PC-9 (cell line): ENCODE measurements at regions of chr6 and their contacts with region 1.

Region 1: DNA sequence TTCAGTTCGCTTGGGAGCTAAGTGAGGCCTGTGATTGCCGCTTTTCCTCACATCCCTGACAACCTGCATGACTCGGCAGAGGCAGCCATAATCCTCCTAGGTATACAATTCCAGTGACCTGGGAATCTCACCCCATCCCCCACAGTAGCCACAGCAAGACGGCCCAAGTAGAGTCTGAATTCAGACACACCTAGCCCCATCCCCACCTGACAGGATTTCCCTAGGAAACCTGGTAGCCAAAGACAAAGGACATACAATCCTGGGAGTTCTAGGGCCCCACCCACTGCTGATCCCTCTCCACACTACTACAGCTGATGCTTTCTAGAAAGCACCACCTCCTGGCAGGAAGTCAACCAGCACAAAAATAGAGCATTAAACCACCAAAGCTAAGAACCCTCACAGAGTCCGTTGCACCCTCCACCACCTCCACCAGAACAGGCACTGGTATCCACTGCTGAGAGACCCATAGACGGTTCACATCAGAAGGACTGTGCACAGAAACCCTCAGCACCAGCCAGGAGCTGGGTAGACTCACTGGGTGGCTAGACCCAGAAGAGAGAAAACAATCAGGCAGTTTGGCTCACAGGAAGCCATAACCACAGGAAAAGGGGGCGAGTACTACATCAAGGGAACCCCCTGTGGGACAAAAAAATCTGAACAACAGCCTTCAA is 17.9 kb upstream of the RUNX2 start:
- DNase-seq: no peak
- H3K4me3 ChIP-seq: no peak overlapping the region
- H3K27ac ChIP-seq: no peak overlapping the region
- H3K4me1 ChIP-seq: no peaks in the 10 kb centered on the region
- H3K27me3 ChIP-seq: no peaks in the 10 kb centered on the region
- CTCF ChIP-seq: no peak

Region 2: DNA sequence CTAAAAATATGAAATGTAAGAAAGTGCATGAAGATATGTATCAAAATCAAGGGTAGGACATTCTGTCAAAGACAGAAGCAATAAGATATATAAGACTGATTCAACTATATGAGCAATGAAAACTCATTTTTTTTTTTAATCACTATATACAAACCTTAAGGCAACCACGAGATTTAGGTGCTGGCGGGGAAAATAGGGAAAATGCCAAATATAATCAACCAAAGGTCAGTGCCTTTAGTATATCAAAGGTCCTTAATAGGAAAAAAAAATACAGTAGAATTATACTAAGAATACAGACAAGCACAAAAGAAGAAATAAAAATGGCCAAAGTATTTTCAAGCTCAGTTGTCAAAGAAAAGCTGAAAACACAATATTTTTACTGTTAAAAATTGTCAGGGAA is 43.4 kb after region 1 on chr6:
- CTCF ChIA-PET with region 1: no interaction called
- POLR2A ChIA-PET with region 1: interaction called, 15 read pairs
- intact Hi-C with region 1: no loop called
- DNase-seq: no peak
- H3K4me3 ChIP-seq: no peak overlapping the region
- H3K27ac ChIP-seq: no peak overlapping the region
- H3K4me1 ChIP-seq: no peaks in the 10 kb centered on the region
- H3K27me3 ChIP-seq: no peaks in the 10 kb centered on the region
- CTCF ChIP-seq: no peak

Region 3: GRCh38 chr6:45377554-45378333 is 67.5 kb after region 1 on chr6 and contains the start of gene SUPT3H:
- CTCF ChIA-PET with region 1: no interaction called
- POLR2A ChIA-PET with region 1: no interaction called
- intact Hi-C with region 1: no loop called
- DNase-seq: peak; percentile 76 to 89
- H3K4me3 ChIP-seq: peak within 1 kb of the TSS; percentile 93
- H3K27ac ChIP-seq: peak within 1 kb of the TSS; percentile 94
- H3K4me1 ChIP-seq: peaks cover 8% of the 10 kb centered on the region
- H3K27me3 ChIP-seq: no peaks in the 10 kb centered on the region
- CTCF ChIP-seq: no peak
- total RNA-seq, gene SUPT3H: 9.0 and 9.2 TPM in 2 replicates

Region 4: GRCh38 chr6:45880159-45880558 is 569.9 kb after region 1 on chr6:
- CTCF ChIA-PET with region 1: no interaction called
- POLR2A ChIA-PET with region 1: interaction called, 12 read pairs
- intact Hi-C with region 1: no loop called
- DNase-seq: peak; percentile 51 to 82
- H3K4me3 ChIP-seq: no peak overlapping the region
- H3K27ac ChIP-seq: no peak overlapping the region; the same call in 1 of the 2 replicates
- H3K4me1 ChIP-seq: peaks cover 16% of the 10 kb centered on the region
- H3K27me3 ChIP-seq: no peaks in the 10 kb centered on the region
- CTCF ChIP-seq: no peak